A673 (cell line): ENCODE measurements at regions of chr2 and their contacts with region 1.

Region 1: GRCh38 chr2:215423234-215423633 is 12.6 kb downstream of the FN1 start:
- DNase-seq: no peak
- H3K4me3 ChIP-seq: no peak overlapping the region
- H3K27ac ChIP-seq: peak overlapping the region; percentile 20
- H3K4me1 ChIP-seq: peaks cover 31% of the 10 kb centered on the region
- H3K27me3 ChIP-seq: no peaks in the 10 kb centered on the region
- CTCF ChIP-seq: no peak

Region 2: GRCh38 chr2:215380699-215381098 is 42.5 kb before region 1 on chr2:
- CTCF ChIA-PET with region 1: no interaction called
- POLR2A ChIA-PET with region 1: no interaction called
- intact Hi-C with region 1: loop called (anchors 5 kb)
- DNase-seq: no peak
- H3K4me3 ChIP-seq: no peak overlapping the region
- H3K27ac ChIP-seq: peak overlapping the region; percentile 17
- H3K4me1 ChIP-seq: no peaks in the 10 kb centered on the region
- H3K27me3 ChIP-seq: no peaks in the 10 kb centered on the region
- CTCF ChIP-seq: no peak